CD4-positive, alpha-beta memory T cell (primary cell): ENCODE measurements at regions of chrX and their contacts with region 1.

Region 1: DNA sequence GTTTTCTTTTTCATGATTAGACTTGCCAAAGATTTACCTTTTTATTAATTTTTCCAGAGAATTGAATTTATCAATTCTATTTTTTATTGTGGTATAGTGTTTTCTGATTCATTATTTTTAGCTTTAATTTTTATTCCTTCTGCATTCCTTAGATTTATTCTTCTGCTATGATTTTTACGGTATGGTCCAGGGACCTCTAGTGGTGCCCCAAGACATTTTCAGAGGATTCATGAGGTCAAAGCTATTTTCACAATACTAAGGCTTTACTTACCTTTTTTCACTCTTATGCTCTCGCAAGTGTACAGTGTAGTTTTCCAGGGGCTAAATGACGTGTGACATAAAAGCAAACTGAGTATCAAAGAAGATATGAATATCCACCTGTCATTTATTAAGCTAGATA is 8.0 kb downstream of the RADX start:
- DNase-seq: peak in 2 of 5 donors; percentile 8 to 15
- H3K4me3 ChIP-seq: no peak overlapping the region
- H3K4me3 Mint-ChIP-seq: no peak overlapping the region
- H3K27ac ChIP-seq: no peak overlapping the region
- H3K27ac Mint-ChIP-seq: no peak overlapping the region
- H3K4me1 ChIP-seq: no peaks in the 10 kb centered on the region
- H3K4me1 Mint-ChIP-seq: peaks cover 0 to 13% (median 3%) of the 10 kb centered on the region in 4 donors
- H3K27me3 ChIP-seq: no peaks in the 10 kb centered on the region
- H3K27me3 Mint-ChIP-seq: no peaks in the 10 kb centered on the region

Region 2: DNA sequence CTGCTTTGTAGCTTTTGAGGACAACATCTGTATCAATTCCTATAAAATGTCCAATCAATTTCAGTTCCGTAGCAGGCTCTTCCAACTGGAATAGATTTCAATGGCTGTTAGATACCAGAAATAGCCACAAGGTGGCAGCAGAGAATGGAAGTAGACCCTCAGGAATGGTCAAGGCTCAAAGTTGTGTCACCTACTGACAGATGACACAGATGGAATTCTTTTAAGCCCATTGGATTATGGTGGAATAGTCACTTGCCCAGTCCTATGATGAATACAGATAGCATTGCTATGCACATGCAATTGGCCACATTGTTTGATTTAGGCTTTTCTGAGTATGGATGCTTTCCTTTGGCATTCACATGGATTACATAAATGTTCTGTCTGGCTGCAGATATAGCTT is 138.5 kb before region 1 on chrX:
- CTCF ChIA-PET with region 1: interaction called, 19 read pairs
- POLR2A ChIA-PET with region 1: no interaction called
- intact Hi-C with region 1: loop called (anchors 10 kb)
- DNase-seq: peak; percentile 31 to 46 (median 32)
- H3K4me3 ChIP-seq: no peak overlapping the region
- H3K4me3 Mint-ChIP-seq: no peak overlapping the region
- H3K27ac ChIP-seq: no peak overlapping the region
- H3K27ac Mint-ChIP-seq: no peak overlapping the region
- H3K4me1 ChIP-seq: peaks cover 16% of the 10 kb centered on the region
- H3K4me1 Mint-ChIP-seq: peaks cover 15 to 27% (median 20%) of the 10 kb centered on the region in 4 donors
- H3K27me3 ChIP-seq: no peaks in the 10 kb centered on the region
- H3K27me3 Mint-ChIP-seq: no peaks in the 10 kb centered on the region